Activated CD4-positive, alpha-beta T cell treated with anti-CD3 and anti-CD28 coated beads for 36 hours (primary cell): ENCODE measurements at regions of chr13 and their contacts with region 1.

Region 1: DNA sequence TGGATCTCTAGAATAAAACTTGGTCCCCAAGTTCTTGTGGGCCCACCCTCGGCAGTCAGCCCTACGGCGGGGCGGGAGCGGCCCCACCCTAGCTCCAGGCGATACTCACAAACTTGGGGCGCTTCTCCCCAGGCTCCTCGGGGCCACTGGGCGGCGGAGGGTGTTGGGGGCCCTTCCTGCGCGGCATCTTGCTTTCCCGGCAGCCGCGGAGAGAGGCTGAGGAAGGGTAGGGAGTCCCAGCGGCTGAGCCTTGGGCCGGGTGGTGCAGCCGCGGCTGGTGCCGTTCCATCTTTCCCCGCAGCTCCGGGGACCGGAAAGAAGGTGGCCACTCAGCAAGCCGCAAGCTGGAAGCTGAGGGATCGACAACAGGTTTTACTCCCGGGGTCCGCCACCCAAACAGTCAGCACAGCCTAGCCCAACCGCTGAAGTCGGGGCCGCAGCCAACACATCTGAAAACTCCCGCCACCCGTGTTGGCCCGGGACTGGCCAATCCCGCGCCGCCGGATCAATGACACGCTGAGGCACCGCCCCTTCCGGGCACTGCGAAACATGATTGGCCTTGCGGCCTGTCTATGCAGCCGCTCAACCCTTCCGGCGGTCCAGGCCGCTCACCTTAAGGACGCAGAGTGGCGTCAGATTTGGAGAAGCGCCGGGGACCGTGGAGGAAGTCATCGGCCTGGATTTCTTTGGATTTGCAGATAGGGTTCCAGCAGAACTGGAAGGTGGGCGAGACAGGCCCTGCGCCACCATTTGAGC is at the start of gene DIAPH3:
- DNase-seq: peak; percentile 97
- ATAC-seq: peak; percentile 99
- H3K4me3 Mint-ChIP-seq: peak within 1 kb of the TSS; percentile 95
- H3K27ac Mint-ChIP-seq: peak within 1 kb of the TSS; percentile 94
- H3K4me1 Mint-ChIP-seq: peaks cover 33% of the 10 kb centered on the region
- H3K27me3 Mint-ChIP-seq: no peaks in the 10 kb centered on the region
- total RNA-seq, gene DIAPH3: 28.5 to 29.3 TPM

Region 2: DNA sequence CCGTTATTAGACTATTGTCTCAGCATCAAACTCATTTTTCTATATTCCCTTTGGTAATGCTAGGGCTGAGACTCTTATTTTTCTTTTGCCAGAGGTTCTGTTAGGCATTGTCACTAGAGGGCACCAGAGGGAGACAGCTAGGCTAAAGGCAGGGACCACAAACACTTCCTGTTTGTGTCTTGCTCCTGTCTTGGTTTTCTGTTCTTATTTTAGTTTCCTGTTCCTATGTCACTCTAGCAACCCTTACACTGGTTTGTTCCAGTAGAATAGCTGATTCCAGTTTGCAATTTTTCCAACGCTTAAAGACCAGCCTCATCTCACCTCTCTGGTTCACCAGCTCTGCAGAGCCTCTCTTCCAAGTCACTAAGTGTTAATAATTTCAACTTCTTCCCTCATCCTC is 772.0 kb before region 1 on chr13:
- CTCF ChIA-PET with region 1: no interaction called
- POLR2A ChIA-PET with region 1: no interaction called
- intact Hi-C with region 1: loop called in 1 of 2 experiments (anchors 10 kb)
- DNase-seq: peak; percentile 68
- ATAC-seq: peak; percentile 96
- H3K4me3 Mint-ChIP-seq: no peak overlapping the region
- H3K27ac Mint-ChIP-seq: no peak overlapping the region
- H3K4me1 Mint-ChIP-seq: no peaks in the 10 kb centered on the region
- H3K27me3 Mint-ChIP-seq: peaks cover 2% of the 10 kb centered on the region

Region 3: DNA sequence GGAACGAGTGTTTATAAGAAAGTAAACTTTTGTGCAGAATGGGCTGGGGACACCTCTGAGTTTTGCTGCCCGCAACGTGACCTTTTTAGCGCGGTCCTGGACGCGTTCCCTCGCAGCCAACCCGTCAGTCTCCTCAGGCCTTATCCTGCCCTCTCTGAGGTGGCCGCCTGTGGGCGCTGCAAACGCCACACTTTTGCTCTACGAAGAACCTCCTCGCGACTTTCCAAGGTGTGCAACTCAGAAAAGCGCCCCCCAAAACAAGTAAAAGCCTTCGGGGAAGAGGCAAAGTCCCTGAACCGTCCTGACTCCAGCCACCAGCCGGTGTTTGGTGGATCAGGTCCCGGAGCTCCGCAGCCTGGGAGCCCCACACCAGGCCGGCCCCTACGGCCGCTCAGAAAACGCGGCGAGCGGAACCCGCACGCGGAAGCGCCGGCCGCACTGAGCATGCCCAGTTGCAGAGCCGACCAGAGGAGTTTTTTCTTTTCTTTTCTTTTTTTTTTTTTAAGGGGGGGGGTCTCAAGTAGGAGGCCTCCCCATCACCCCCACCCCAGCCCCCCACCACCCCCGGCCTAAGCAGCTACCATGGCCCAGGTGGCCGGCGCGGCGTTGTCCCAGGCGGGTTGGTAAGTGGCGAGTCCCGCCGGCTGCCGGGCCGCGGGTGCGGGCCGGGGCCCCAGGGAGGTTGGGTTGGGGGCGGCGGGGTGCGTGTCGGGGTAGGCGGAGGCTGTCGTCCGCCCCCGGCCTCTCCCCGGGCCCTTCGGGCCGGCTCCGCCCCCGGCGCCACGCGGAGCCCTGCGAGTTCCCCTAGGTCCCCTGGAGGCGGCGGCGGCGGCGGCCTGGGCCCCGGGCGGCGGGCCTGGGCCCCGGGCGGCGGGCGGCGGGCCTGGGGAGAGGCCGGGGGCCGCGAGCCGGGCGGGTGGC is 233.4 kb after region 1 on chr13 and contains the start of gene TDRD3:
- CTCF ChIA-PET with region 1: no interaction called
- POLR2A ChIA-PET with region 1: no interaction called
- intact Hi-C with region 1: loop called (anchors 1 kb)
- DNase-seq: peak; percentile 90
- ATAC-seq: peak; percentile 78
- H3K4me3 Mint-ChIP-seq: peak within 1 kb of the TSS; percentile 93
- H3K27ac Mint-ChIP-seq: peak within 1 kb of the TSS; percentile 97
- H3K4me1 Mint-ChIP-seq: peaks cover 25% of the 10 kb centered on the region
- H3K27me3 Mint-ChIP-seq: no peaks in the 10 kb centered on the region
- total RNA-seq, gene TDRD3: 15.8 to 16.4 TPM

Region 4: GRCh38 chr13:60417734-60418133 is 254.1 kb after region 1 on chr13:
- CTCF ChIA-PET with region 1: no interaction called
- POLR2A ChIA-PET with region 1: no interaction called
- intact Hi-C with region 1: loop called in 1 of 2 experiments (anchors 5 kb)
- DNase-seq: no peak
- ATAC-seq: peak; percentile 89
- H3K4me3 Mint-ChIP-seq: no peak overlapping the region
- H3K27ac Mint-ChIP-seq: peak overlapping the region; percentile 28
- H3K4me1 Mint-ChIP-seq: peaks cover 20% of the 10 kb centered on the region
- H3K27me3 Mint-ChIP-seq: no peaks in the 10 kb centered on the region